Esophagus muscularis mucosa (tissue), 4 donors: ENCODE measurements at regions of chr2 and their contacts with region 1.

Region 1: GRCh38 chr2:80326214-80326613 is 21.7 kb upstream of the LRRTM1 start:
- DNase-seq: no peak
- H3K4me3 ChIP-seq: no peak overlapping the region
- H3K27ac ChIP-seq: no peak overlapping the region
- H3K4me1 ChIP-seq: peaks cover 0 to 10% (median 5%) of the 10 kb centered on the region in 4 donors
- H3K27me3 ChIP-seq: peaks cover 0 to 10% (median 0%) of the 10 kb centered on the region in 4 donors
- CTCF ChIP-seq: peak; percentile 16 to 45 (median 43)
- EP300 ChIP-seq: no peak
- POLR2A ChIP-seq: no peak

Region 2: DNA sequence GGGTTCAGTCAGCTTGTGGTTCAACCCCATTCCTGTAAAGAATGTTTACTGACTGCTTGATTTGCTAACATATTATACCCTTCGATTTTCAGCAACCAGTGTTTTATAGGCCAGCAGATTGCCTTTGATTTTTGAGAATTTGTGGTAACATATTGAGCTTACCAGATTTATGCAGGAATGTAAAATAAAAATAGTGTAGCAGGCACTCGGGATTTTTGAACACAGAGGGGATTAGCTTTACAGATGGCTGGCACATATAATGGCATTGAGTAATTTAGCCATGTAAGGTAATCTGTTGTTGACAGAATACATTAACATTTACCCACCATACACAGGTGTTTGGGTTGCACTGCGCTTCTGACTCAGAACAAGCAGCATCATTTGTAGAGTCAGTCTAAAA is 375.7 kb before region 1 on chr2:
- intact Hi-C with region 1: no loop called
- DNase-seq: no peak
- H3K4me3 ChIP-seq: no peak overlapping the region
- H3K27ac ChIP-seq: no peak overlapping the region
- H3K4me1 ChIP-seq: no peaks in the 10 kb centered on the region
- H3K27me3 ChIP-seq: no peaks in the 10 kb centered on the region
- CTCF ChIP-seq: no peak
- EP300 ChIP-seq: no peak
- POLR2A ChIP-seq: no peak

Region 3: GRCh38 chr2:80506563-80506962 is 180.3 kb after region 1 on chr2:
- intact Hi-C with region 1: loop called (anchors 10 kb)
- DNase-seq: no peak
- H3K4me3 ChIP-seq: no peak overlapping the region
- H3K27ac ChIP-seq: no peak overlapping the region
- H3K4me1 ChIP-seq: no peaks in the 10 kb centered on the region
- H3K27me3 ChIP-seq: no peaks in the 10 kb centered on the region
- CTCF ChIP-seq: no peak
- EP300 ChIP-seq: no peak
- POLR2A ChIP-seq: no peak